Body of pancreas (tissue), 4 donors: ENCODE measurements at regions of chr6 and their contacts with region 1.

Region 1: GRCh38 chr6:113306552-113307145 is 550.5 kb upstream of the MARCKS start:
- DNase-seq: peak; percentile 84 to 92 (median 87)
- ATAC-seq: peak; percentile 98
- H3K4me3 ChIP-seq: no peak overlapping the region
- H3K27ac ChIP-seq: no peak overlapping the region
- H3K4me1 ChIP-seq: no peaks in the 10 kb centered on the region
- H3K27me3 ChIP-seq: no peaks in the 10 kb centered on the region
- CTCF ChIP-seq: peak; percentile 43 to 87 (median 84)
- POLR2A ChIP-seq: no peak

Region 2: GRCh38 chr6:113416170-113416569 is 109.5 kb after region 1 on chr6:
- intact Hi-C with region 1: no loop called
- DNase-seq: no peak
- ATAC-seq: no peak
- H3K4me3 ChIP-seq: no peak overlapping the region
- H3K27ac ChIP-seq: no peak overlapping the region
- H3K4me1 ChIP-seq: peaks cover 11% of the 10 kb centered on the region
- H3K27me3 ChIP-seq: no peaks in the 10 kb centered on the region
- CTCF ChIP-seq: no peak
- POLR2A ChIP-seq: no peak

Region 3: GRCh38 chr6:113564371-113565161 is 257.9 kb after region 1 on chr6:
- intact Hi-C with region 1: no loop called
- DNase-seq: peak; percentile 76 to 92 (median 86)
- ATAC-seq: peak; percentile 93
- H3K4me3 ChIP-seq: no peak overlapping the region
- H3K27ac ChIP-seq: peak overlapping the region; percentile 73 to 79 (median 76)
- H3K4me1 ChIP-seq: peaks cover 4% of the 10 kb centered on the region
- H3K27me3 ChIP-seq: no peaks in the 10 kb centered on the region
- CTCF ChIP-seq: peak in 4 of 7 experiments; percentile 26 to 39 (median 32)
- POLR2A ChIP-seq: peak in 2 of 3 donors; percentile 54 to 57

Region 4: GRCh38 chr6:113879186-113880096 is 572.8 kb after region 1 on chr6:
- intact Hi-C with region 1: loop called (anchors 10 kb)
- DNase-seq: peak; percentile 63 to 78 (median 70)
- ATAC-seq: peak; percentile 99
- H3K4me3 ChIP-seq: no peak overlapping the region
- H3K27ac ChIP-seq: peak overlapping the region in 1 of 4 donors; percentile 38
- H3K4me1 ChIP-seq: peaks cover 8% of the 10 kb centered on the region
- H3K27me3 ChIP-seq: no peaks in the 10 kb centered on the region
- CTCF ChIP-seq: peak; percentile 59 to 92 (median 89)
- POLR2A ChIP-seq: no peak